B cell (primary cell): ENCODE measurements at regions of chr7 and their contacts with region 1.

Region 1: DNA sequence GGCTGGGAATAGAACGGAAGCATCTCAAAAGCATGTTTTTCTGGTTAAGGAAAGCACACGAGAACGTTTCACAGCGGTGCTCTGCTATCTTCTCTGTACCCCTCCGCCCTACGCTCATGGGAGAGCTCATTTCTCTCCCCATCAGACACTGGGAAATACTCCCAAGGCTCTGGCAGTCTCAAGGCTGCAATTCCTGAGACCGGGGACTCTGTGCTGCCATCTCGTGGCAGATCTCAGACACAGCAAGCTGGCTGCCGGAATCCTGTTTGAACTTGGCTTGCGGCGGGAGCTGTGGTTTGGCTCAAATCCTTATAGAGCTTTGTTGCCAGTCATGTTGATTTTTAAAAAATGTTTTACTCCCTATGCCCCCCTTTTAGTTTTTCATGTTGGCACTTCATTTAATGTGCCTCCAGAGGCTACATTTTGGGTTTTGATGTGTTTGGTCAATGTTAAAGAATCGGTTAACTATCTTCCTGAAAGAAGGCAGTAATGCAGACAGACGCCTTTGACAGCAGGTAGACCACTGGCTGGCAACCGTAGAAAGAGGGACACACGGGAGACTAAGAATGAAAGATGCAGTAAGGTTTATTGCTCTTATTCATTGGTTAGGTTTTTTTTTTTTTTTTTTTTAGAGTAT is 27.6 kb downstream of the BMPER start:
- DNase-seq: peak; percentile 65
- ATAC-seq: peak; percentile 53
- H3K4me3 ChIP-seq: no peak overlapping the region
- H3K4me3 Mint-ChIP-seq: no peak overlapping the region
- H3K27ac ChIP-seq: no peak overlapping the region
- H3K27ac Mint-ChIP-seq: no peak overlapping the region
- H3K4me1 ChIP-seq: no peaks in the 10 kb centered on the region
- H3K4me1 Mint-ChIP-seq: no peaks in the 10 kb centered on the region
- H3K27me3 ChIP-seq: peaks cover 0 to 18% (median 6%) of the 10 kb centered on the region in 4 experiments
- H3K27me3 Mint-ChIP-seq: peaks cover 9% of the 10 kb centered on the region
- CTCF ChIP-seq: peak; percentile 90

Region 2: DNA sequence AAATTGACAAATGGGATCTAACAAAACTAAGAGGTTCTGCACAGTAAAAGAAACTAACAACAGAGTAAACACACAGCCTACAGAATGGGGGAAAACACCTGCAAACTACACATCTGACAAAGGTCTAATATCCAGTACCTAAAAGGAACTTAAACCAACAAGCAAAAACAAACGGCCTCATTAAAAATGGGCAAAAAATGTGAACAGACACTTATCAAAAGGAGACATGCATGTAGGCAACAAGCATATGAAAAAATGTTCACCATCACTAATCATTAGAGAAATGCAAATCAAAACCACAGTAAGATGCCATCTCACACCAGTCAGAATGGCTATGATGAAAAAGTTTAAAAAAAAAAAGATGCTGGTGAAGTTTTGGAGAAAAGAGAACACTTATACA is 1238.8 kb before region 1 on chr7:
- CTCF ChIA-PET with region 1: interaction called, 10 read pairs
- POLR2A ChIA-PET with region 1: no interaction called
- intact Hi-C with region 1: loop called (anchors 5 kb)
- DNase-seq: no peak
- ATAC-seq: no peak
- H3K4me3 ChIP-seq: no peak overlapping the region
- H3K4me3 Mint-ChIP-seq: no peak overlapping the region
- H3K27ac ChIP-seq: no peak overlapping the region
- H3K27ac Mint-ChIP-seq: no peak overlapping the region
- H3K4me1 ChIP-seq: peaks cover 10 to 12% of the 10 kb centered on the region in 2 donors
- H3K4me1 Mint-ChIP-seq: peaks cover 16% of the 10 kb centered on the region
- H3K27me3 ChIP-seq: no peaks in the 10 kb centered on the region
- H3K27me3 Mint-ChIP-seq: no peaks in the 10 kb centered on the region
- CTCF ChIP-seq: no peak

Region 3: GRCh38 chr7:33185786-33186185 is 747.2 kb before region 1 on chr7:
- CTCF ChIA-PET with region 1: interaction called, 89 read pairs
- POLR2A ChIA-PET with region 1: no interaction called
- intact Hi-C with region 1: no loop called
- DNase-seq: peak; percentile 60
- ATAC-seq: no peak
- H3K4me3 ChIP-seq: no peak overlapping the region
- H3K4me3 Mint-ChIP-seq: no peak overlapping the region
- H3K27ac ChIP-seq: no peak overlapping the region
- H3K27ac Mint-ChIP-seq: no peak overlapping the region
- H3K4me1 ChIP-seq: peaks cover 3% of the 10 kb centered on the region in 2 donors
- H3K4me1 Mint-ChIP-seq: peaks cover 6% of the 10 kb centered on the region
- H3K27me3 ChIP-seq: no peaks in the 10 kb centered on the region
- H3K27me3 Mint-ChIP-seq: no peaks in the 10 kb centered on the region
- CTCF ChIP-seq: peak; percentile 76

Region 4: DNA sequence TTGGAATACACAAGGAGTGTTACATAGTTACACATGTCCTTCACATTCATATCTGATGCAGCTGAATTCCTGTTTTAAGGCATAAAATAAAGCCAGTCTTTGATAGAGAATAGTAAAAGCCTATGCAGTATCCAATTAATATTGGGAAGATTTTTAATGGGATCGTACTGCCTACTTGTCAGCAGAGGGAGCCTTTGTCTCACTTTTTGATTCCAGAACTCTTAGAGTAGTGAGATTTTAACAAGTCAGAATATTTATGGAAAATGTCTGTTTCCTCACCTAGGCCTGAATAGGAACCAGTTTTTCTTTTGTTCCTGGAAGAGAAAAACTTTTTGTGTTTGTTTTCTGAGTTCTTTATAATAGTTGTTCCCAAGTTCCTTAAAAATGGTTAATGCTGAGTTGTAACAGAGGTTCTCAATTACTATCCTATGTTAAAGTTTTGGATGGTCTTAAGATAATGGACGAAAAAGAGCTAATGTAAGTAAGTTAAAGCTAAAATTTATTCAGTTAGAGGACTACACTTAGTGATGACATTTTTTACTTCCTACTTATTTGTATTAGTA is 689.5 kb before region 1 on chr7:
- CTCF ChIA-PET with region 1: interaction called, 7 read pairs
- POLR2A ChIA-PET with region 1: no interaction called
- intact Hi-C with region 1: loop called (anchors 10 kb)
- DNase-seq: peak; percentile 3
- ATAC-seq: no peak
- H3K4me3 ChIP-seq: no peak overlapping the region
- H3K4me3 Mint-ChIP-seq: no peak overlapping the region
- H3K27ac ChIP-seq: no peak overlapping the region
- H3K27ac Mint-ChIP-seq: no peak overlapping the region
- H3K4me1 ChIP-seq: no peaks in the 10 kb centered on the region
- H3K4me1 Mint-ChIP-seq: no peaks in the 10 kb centered on the region
- H3K27me3 ChIP-seq: no peaks in the 10 kb centered on the region
- H3K27me3 Mint-ChIP-seq: no peaks in the 10 kb centered on the region
- CTCF ChIP-seq: peak; percentile 26

Region 5: GRCh38 chr7:33423646-33424020 is 509.3 kb before region 1 on chr7:
- CTCF ChIA-PET with region 1: interaction called, 6 read pairs
- POLR2A ChIA-PET with region 1: no interaction called
- intact Hi-C with region 1: loop called (anchors 1 kb)
- DNase-seq: peak; percentile 37
- ATAC-seq: peak; percentile 36
- H3K4me3 ChIP-seq: no peak overlapping the region
- H3K4me3 Mint-ChIP-seq: no peak overlapping the region
- H3K27ac ChIP-seq: no peak overlapping the region
- H3K27ac Mint-ChIP-seq: no peak overlapping the region
- H3K4me1 ChIP-seq: peaks cover 7 to 15% of the 10 kb centered on the region in 2 donors
- H3K4me1 Mint-ChIP-seq: peaks cover 19% of the 10 kb centered on the region
- H3K27me3 ChIP-seq: no peaks in the 10 kb centered on the region
- H3K27me3 Mint-ChIP-seq: no peaks in the 10 kb centered on the region
- CTCF ChIP-seq: peak; percentile 57